ENCODE measurements at regions of chr11 and their contacts with region 1.

Region 1: GRCh38 chr11:3807909-3808860 is at the start of gene PGAP2:
- DNase-seq: peak; percentile 61
- ATAC-seq: peak; percentile 89
- H3K4me3 ChIP-seq: peak within 1 kb of the TSS; percentile 68 to 96 (median 84)
- H3K27ac ChIP-seq: peak within 1 kb of the TSS; percentile 48
- H3K4me1 ChIP-seq: peaks cover 19% of the 10 kb centered on the region
- H3K27me3 ChIP-seq: no peaks in the 10 kb centered on the region; a peak in 1 of 5 replicates
- CTCF ChIP-seq: peak; percentile 86
- EP300 ChIP-seq: no peak
- POLR2A ChIP-seq: peak in 1 of 2 experiments; percentile 52; a peak in 2 of 4 replicates
- RAD21 ChIP-seq: peak; percentile 49
- total RNA-seq, gene PGAP2: 16.8 and 21.5 TPM in 2 replicates

Region 2: DNA sequence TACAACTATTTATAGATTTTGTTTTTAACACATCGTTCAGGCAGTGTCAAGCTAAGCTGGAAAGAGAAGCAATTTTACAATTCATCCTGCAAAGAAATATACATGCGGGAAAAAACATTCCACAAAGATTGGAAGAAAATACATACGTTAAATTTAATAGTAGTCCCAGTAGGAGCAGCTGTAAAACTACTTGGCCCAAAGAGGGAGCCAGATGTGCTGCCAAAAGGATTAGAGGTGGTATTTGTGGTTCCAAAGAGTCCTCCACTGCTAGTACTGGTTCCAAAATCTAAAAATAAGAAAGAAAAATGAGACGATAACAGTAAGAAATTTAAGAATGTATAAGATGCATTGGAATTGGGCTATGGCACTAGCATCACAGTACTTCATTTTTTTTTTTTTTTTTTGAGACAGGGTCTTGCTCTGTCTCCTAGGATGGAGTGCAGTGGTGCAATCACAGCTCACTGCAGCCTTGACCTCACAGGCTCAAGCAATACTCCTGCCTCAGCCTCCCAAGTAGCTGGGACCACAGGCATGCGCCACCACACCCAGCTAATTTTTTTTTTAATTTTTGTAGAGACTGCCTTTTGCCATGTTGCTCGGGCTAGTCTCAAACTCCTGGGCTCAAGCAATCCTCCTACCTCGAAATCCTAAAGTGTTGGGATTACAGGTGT is 32.3 kb before region 1 on chr11:
- CTCF ChIA-PET with region 1: no interaction called
- POLR2A ChIA-PET with region 1: no interaction called
- in situ Hi-C with region 1: no loop called
- intact Hi-C with region 1: loop called (anchors 2 kb)
- DNase-seq: no peak
- ATAC-seq: no peak
- H3K4me3 ChIP-seq: no peak overlapping the region
- H3K27ac ChIP-seq: no peak overlapping the region
- H3K4me1 ChIP-seq: no peaks in the 10 kb centered on the region
- H3K27me3 ChIP-seq: no peaks in the 10 kb centered on the region
- CTCF ChIP-seq: no peak
- EP300 ChIP-seq: no peak
- POLR2A ChIP-seq: no peak
- RAD21 ChIP-seq: no peak

Region 3: DNA sequence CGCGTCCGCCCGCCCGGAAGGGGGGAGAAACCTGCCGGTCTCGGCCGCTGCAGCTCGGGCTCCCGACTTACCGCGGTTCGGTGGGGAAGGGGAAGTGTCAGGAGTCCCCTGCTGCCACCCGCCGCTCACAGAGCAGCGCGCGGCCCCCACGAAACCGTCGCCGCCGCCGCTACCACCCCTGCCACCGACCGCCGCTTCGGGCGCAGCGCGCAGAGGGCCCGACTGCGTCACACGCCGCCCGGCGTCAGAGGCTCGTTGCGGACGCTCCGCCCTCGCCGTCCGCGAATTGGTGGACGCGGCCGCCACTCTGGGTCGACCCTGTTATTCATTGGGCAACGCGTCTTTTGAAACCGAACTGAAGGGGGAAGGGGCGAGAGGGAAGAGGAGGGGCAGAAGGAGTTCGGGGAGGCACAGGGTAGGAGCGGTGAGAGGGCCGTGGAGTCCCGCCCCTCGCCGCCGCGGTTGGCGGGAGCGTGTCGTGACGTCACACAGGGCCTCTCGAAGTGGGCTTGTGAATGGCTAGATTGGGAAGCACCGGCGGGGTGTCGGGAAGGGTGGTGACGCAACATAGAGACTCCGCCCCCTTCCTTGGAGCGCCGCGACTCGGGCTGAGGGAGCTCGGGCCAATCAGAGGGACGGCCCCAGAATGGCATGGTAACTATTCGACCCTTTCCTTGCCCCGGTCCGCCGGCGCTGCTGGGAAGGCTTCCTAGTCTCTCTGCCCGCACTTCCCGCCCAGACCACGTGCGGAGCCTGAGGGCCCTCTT is 10.7 kb before region 1 on chr11 and contains the start of gene NUP98:
- CTCF ChIA-PET with region 1: interaction called, 3 read pairs
- POLR2A ChIA-PET with region 1: interaction called, 35 read pairs
- in situ Hi-C with region 1: no loop called
- intact Hi-C with region 1: no loop called
- DNase-seq: peak; percentile 99
- ATAC-seq: peak; percentile 92
- H3K4me3 ChIP-seq: peak within 1 kb of the TSS; percentile 87 to 98 (median 96)
- H3K27ac ChIP-seq: peak within 1 kb of the TSS; percentile 88
- H3K4me1 ChIP-seq: peaks cover 39% of the 10 kb centered on the region
- H3K27me3 ChIP-seq: no peaks in the 10 kb centered on the region; a peak in 1 of 5 replicates
- CTCF ChIP-seq: peak; percentile 22
- EP300 ChIP-seq: no peak
- POLR2A ChIP-seq: peak; percentile 77 to 91
- RAD21 ChIP-seq: peak; percentile 69; the same call in 1 of the 2 replicates
- total RNA-seq, gene NUP98: 85.3 and 126 TPM in 2 replicates

Region 4: DNA sequence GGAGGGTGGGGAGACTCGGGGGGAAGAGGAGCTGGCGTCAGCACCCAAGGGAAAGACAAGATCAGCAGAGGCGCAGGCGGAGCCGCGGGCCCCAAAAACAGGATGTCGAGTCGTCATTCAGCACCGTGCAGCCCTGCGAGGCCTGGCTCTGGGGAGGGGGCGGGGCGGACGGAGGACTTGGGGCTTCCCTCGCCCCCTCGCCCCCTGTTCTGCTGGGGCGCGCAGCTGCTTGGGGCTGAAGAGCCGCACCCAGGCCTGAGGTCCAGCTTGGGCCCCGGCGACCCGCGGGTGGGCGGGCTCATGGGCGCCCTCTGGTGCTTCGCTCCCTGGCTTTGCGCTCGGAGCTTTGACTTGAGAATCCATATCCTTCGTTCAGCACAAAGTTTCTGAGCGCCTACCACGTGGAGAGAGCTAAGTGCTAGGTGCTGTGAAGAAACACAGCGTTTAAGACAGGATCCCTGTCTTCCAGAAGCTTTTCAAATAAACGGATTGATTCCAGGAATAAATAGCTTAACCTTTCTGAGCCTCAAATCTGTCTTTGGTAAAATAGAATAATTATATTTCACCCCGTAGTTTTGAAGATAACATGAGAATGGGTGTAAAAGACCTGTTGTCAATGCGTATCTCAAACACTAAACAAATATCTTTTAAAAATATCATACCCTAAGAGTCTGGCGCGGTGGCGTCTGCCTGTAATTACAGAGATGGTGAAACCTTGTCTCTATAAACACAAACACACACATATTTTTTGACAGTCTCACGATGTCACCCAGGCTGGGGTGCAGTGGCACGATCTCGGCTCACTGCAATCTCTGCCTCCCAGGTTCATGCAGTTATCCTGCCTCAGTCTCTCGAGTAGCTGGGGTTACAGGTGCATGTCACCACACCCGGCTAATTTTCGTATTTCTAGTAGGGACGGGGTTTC is 33.5 kb after region 1 on chr11:
- CTCF ChIA-PET with region 1: no interaction called
- POLR2A ChIA-PET with region 1: interaction called, 8 read pairs
- in situ Hi-C with region 1: no loop called
- intact Hi-C with region 1: loop called (anchors 2 kb)
- DNase-seq: peak; percentile 79
- ATAC-seq: peak; percentile 84
- H3K4me3 ChIP-seq: peak overlapping the region; percentile 79 to 84 (median 83)
- H3K27ac ChIP-seq: peak overlapping the region; percentile 75
- H3K4me1 ChIP-seq: peaks cover 46% of the 10 kb centered on the region
- H3K27me3 ChIP-seq: no peaks in the 10 kb centered on the region; a peak in 1 of 5 replicates
- CTCF ChIP-seq: peak; percentile 91
- EP300 ChIP-seq: no peak
- POLR2A ChIP-seq: no peak
- RAD21 ChIP-seq: peak; percentile 63

Region 5: DNA sequence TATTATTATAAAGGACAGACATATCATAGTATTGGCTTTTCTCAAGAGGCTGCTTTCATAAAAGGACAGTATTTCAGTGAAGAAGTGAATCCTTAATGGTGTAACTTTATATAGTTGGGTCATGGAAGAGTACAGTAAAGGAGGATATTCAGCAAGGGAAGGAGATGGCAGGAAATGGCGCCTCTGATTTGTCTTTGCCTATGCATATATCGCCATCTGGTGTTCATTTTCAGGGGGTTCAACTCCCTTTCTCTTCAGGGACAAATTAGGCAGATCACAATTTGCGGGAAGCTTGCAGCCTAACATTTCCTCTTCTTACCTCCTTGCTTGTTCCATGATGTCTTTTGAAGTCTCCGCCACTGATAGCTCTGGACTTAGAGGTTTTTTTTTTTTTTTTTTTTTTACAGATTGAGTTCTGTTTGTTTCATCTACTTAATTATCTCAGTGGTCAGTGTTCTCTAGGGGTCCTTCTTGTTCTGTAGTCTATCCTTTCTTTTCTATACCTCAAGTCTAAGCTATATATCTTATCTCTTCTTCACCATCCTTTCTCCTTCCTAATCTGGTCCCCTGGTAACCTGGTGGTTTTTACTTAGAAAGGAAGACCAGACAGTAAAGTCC is 264.6 kb after region 1 on chr11:
- CTCF ChIA-PET with region 1: no interaction called
- POLR2A ChIA-PET with region 1: no interaction called
- in situ Hi-C with region 1: no loop called
- intact Hi-C with region 1: loop called (anchors 1 kb)
- DNase-seq: peak; percentile 72
- ATAC-seq: peak; percentile 79
- H3K4me3 ChIP-seq: no peak overlapping the region
- H3K27ac ChIP-seq: no peak overlapping the region
- H3K4me1 ChIP-seq: no peaks in the 10 kb centered on the region
- H3K27me3 ChIP-seq: no peaks in the 10 kb centered on the region
- CTCF ChIP-seq: peak; percentile 88
- EP300 ChIP-seq: no peak
- POLR2A ChIP-seq: no peak
- RAD21 ChIP-seq: peak; percentile 88